PC-3 (cell line): ENCODE measurements at regions of chr3 and their contacts with region 1.

Region 1: GRCh38 chr3:112043603-112044201 is 9.2 kb downstream of the TMPRSS7 start:
- DNase-seq: peak; percentile 85
- ATAC-seq: peak; percentile 96
- H3K4me3 ChIP-seq: peak overlapping the region; percentile 44
- H3K27ac ChIP-seq: no peak overlapping the region
- H3K4me1 ChIP-seq: peaks cover 19% of the 10 kb centered on the region
- H3K27me3 ChIP-seq: no peaks in the 10 kb centered on the region
- CTCF ChIP-seq: peak; percentile 97

Region 2: DNA sequence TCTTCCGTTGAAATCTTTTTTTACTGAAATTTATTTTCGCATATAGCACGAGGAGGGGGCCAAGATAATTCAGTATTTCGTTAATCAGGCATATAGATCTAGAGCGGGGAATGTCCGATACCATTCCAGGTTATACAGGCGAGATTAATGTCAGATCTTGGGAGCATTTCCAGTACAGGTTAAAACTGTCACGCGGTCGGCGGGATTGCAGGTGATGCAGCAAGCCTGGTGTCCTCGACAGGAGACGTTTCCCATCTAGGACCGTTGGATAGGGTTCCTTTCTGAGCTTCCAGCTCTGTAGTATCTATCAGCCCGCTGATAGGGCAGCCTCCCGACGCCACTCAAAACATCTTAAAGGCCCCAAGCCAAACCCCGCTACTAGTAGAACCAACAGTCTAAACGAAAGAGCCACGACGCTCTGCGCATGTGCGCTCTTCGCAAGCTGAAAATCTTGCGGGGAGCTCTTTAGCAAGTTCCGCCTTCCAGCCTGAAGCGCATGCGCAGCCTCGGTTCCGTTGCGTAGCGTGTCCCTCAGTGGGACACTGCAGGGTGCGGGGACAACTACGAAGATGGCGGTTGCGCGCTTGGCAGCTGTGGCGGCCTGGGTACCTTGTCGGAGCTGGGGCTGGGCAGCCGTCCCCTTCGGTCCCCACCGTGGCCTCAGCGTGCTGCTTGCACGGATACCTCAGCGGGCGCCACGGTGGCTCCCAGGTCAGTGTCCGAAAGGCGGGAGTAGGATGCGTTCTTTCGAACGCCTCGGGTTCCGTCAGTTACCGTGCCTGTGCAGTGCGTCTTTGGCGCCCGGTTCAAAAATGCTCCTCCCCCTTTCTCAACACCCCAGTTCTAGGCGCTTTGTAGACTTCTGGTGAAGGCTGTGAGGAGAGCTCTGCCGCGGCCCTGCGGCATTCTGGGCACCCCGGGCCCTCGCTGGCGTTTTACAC is 64.9 kb before region 1 on chr3 and contains the start of gene ABHD10:
- CTCF ChIA-PET with region 1: interaction called, 3 read pairs
- POLR2A ChIA-PET with region 1: interaction called, 10 read pairs
- intact Hi-C with region 1: no loop called
- DNase-seq: peak; percentile 100
- ATAC-seq: peak; percentile 90
- H3K4me3 ChIP-seq: peak within 1 kb of the TSS; percentile 80
- H3K27ac ChIP-seq: peak within 1 kb of the TSS; percentile 36
- H3K4me1 ChIP-seq: peaks cover 28% of the 10 kb centered on the region
- H3K27me3 ChIP-seq: no peaks in the 10 kb centered on the region
- CTCF ChIP-seq: no peak
- total RNA-seq, gene ABHD10: 29.1 and 45.0 TPM in 2 replicates

Region 3: GRCh38 chr3:111989061-111989678 is 54.5 kb before region 1 on chr3:
- CTCF ChIA-PET with region 1: interaction called, 7 read pairs
- POLR2A ChIA-PET with region 1: no interaction called
- intact Hi-C with region 1: loop called (anchors 1 kb)
- DNase-seq: peak; percentile 82
- ATAC-seq: peak; percentile 96
- H3K4me3 ChIP-seq: no peak overlapping the region
- H3K27ac ChIP-seq: no peak overlapping the region
- H3K4me1 ChIP-seq: no peaks in the 10 kb centered on the region; the same call in 1 of the 2 replicates
- H3K27me3 ChIP-seq: no peaks in the 10 kb centered on the region
- CTCF ChIP-seq: peak; percentile 94

Region 4: DNA sequence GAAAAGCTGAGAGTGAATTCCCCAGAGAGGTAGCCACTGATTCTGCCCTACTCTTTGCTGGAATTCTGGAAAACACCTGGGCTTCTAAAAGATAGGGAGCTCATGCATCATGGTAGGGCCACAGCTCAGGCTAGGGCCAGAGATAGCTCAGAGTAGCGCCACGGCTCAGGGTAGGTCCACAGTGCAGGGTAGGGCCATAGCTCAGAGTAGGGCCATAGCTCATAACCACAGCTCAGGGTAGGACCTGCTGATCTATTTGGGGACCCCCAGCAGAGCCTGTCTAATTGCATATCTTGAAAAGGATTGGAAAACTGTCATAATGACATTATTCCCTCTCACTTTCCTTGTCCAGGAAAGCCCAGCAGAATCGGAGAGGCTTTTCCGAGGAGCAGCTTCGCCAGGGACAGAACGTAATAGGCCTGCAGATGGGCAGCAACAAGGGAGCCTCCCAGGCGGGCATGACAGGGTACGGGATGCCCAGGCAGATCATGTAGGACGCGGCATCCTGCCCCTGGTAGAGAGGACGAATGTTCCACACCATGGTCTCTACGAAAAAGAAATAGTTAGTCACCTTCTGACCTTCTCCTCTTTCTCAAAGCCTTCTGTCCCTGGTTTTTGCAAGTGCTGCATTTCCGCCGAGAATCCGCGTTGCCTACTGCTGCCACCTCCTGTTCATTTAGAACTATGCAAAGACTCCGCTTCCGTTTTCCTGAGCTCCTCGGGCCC is 30.5 kb before region 1 on chr3:
- CTCF ChIA-PET with region 1: interaction called, 17 read pairs
- POLR2A ChIA-PET with region 1: no interaction called
- intact Hi-C with region 1: no loop called
- DNase-seq: peak; percentile 86
- ATAC-seq: peak; percentile 85
- H3K4me3 ChIP-seq: no peak overlapping the region
- H3K27ac ChIP-seq: no peak overlapping the region
- H3K4me1 ChIP-seq: 0 out of 2 replicates have a peak, but pooled peaks cover 5% of the 10 kb centered on the region
- H3K27me3 ChIP-seq: no peaks in the 10 kb centered on the region
- CTCF ChIP-seq: peak; percentile 85

Region 5: GRCh38 chr3:112074721-112075497 is 31.2 kb after region 1 on chr3:
- CTCF ChIA-PET with region 1: no interaction called
- POLR2A ChIA-PET with region 1: no interaction called
- intact Hi-C with region 1: loop called (anchors 1 kb)
- DNase-seq: peak; percentile 98
- ATAC-seq: peak; percentile 96
- H3K4me3 ChIP-seq: peak overlapping the region; percentile 60
- H3K27ac ChIP-seq: peak overlapping the region; percentile 99
- H3K4me1 ChIP-seq: peaks cover 36% of the 10 kb centered on the region
- H3K27me3 ChIP-seq: no peaks in the 10 kb centered on the region
- CTCF ChIP-seq: no peak

Region 6: DNA sequence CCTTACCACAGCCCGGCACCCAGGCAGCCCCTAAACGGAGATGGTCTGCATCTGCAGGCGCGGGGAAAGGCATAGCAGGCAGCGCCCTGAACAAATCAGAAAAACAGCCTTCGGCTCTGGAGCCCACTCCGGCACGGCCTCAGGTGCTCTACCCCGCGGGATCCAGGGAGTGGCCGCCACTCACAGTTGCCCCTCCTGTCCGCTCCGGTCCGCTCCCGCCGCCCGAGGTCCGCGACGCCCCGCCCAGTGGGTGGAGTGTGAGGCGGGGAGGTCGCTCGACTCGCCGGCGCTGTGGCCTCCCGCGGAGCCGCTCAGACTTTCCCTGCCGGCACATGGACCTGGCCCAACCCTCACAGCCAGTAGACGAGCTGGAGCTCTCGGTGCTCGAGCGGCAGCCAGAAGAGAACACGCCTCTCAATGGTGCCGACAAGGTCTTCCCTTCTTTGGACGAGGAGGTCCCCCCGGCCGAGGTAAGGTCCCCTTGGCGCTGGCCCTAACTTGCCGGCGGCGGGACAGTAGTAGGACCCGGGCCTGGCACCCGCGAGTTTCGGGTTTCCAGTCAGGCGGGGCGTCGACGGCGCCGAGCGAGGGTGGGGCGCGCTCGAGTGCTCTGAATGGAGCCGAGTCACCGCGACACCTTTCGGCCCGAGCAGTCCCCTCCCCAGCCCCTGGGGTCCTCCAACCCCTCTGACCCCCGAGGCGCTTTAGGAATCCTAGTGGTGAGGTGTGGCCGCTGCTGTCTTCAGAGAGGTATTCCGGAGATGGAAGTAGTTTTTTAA is 42.6 kb after region 1 on chr3 and contains the start of gene C3orf52:
- CTCF ChIA-PET with region 1: no interaction called
- POLR2A ChIA-PET with region 1: interaction called, 3 read pairs
- intact Hi-C with region 1: loop called (anchors 2 kb)
- DNase-seq: peak; percentile 91
- ATAC-seq: peak; percentile 88
- H3K4me3 ChIP-seq: peak within 1 kb of the TSS; percentile 94
- H3K27ac ChIP-seq: peak within 1 kb of the TSS; percentile 93
- H3K4me1 ChIP-seq: peaks cover 44% of the 10 kb centered on the region
- H3K27me3 ChIP-seq: no peaks in the 10 kb centered on the region
- CTCF ChIP-seq: no peak; the same call in 1 of the 2 replicates
- total RNA-seq, gene C3orf52: 14.8 and 16.7 TPM in 2 replicates

Region 7: DNA sequence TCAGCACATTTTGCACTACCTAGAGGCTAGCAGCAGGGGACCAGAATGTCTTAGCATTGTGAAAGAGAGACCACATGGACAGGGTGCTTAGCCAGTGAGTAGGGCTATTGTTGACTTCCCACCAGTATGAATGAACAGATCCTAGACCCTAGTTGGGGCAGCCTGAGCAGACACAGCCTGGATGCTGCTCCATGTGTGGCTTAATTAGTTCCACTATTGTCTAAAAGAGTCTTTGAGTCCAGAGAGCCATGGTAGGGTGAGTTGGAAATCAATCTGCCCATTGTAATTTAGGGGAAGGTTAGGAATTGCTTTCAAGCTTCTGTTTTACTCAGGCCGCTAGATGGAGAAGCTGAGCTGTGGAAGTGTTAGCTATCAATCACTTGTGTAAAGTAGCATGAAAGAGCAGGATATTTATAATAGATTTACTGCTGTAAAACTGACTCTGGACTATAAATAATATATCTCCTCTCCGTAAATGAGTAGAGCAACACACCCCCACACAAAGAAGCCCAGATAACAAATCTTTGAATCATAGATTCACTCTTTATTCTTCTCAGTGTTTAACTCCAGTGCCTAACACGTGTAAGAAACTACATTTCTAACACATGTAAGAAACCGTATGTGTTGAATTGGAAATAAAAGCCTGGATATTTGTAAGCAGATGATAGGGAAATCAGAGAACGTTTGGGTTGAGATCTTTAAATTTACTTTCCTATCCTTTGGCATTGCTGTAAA is 93.4 kb after region 1 on chr3:
- CTCF ChIA-PET with region 1: no interaction called
- POLR2A ChIA-PET with region 1: no interaction called
- intact Hi-C with region 1: no loop called
- DNase-seq: peak; percentile 81
- ATAC-seq: peak; percentile 83
- H3K4me3 ChIP-seq: no peak overlapping the region
- H3K27ac ChIP-seq: no peak overlapping the region
- H3K4me1 ChIP-seq: peaks cover 11% of the 10 kb centered on the region
- H3K27me3 ChIP-seq: no peaks in the 10 kb centered on the region
- CTCF ChIP-seq: peak; percentile 88